Tibial artery (tissue), 4 donors: ENCODE measurements at regions of chr4 and their contacts with region 1.

Region 1: DNA sequence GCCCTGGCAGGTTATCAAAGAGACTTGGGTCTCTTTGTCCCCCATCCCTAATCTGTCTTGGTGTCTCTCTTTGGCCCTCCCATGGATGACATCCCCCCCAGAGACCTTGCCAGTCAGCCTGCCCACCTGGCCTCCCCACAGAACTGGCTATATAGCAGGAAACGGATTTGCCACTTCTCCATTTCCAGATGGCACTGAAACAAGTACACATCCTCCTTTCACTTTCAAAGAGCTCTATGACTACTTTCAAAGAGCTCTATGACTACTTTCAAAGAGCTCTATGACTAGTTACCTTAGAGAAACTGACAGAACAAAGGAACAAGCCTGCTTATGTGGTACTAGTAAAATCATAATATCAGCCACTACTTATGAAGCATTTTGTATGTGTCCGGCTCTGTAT is 175.3 kb downstream of the MAML3 start:
- DNase-seq: no peak
- H3K4me3 ChIP-seq: no peak overlapping the region
- H3K27ac ChIP-seq: no peak overlapping the region
- H3K4me1 ChIP-seq: peaks cover 0 to 73% (median 30%) of the 10 kb centered on the region in 4 donors
- H3K27me3 ChIP-seq: no peaks in the 10 kb centered on the region
- CTCF ChIP-seq: no peak

Region 2: GRCh38 chr4:140085062-140085622 is 106.5 kb after region 1 on chr4:
- intact Hi-C with region 1: loop called (anchors 10 kb)
- DNase-seq: no peak
- H3K4me3 ChIP-seq: peak overlapping the region; percentile 25 to 26
- H3K27ac ChIP-seq: peak overlapping the region; percentile 77 to 81
- H3K4me1 ChIP-seq: peaks cover 0 to 57% (median 19%) of the 10 kb centered on the region in 4 donors
- H3K27me3 ChIP-seq: no peaks in the 10 kb centered on the region
- CTCF ChIP-seq: no peak

Region 3: GRCh38 chr4:140237606-140237986 is 258.9 kb after region 1 on chr4:
- intact Hi-C with region 1: no loop called
- DNase-seq: peak; percentile 83 to 84
- H3K4me3 ChIP-seq: peak overlapping the region; percentile 4 to 39
- H3K27ac ChIP-seq: peak overlapping the region; percentile 70 to 71
- H3K4me1 ChIP-seq: peaks cover 0 to 33% (median 24%) of the 10 kb centered on the region in 4 donors
- H3K27me3 ChIP-seq: no peaks in the 10 kb centered on the region
- CTCF ChIP-seq: no peak